Motor neuron (in vitro differentiated cells): ENCODE measurements at regions of chr11 and their contacts with region 1.

Region 1: DNA sequence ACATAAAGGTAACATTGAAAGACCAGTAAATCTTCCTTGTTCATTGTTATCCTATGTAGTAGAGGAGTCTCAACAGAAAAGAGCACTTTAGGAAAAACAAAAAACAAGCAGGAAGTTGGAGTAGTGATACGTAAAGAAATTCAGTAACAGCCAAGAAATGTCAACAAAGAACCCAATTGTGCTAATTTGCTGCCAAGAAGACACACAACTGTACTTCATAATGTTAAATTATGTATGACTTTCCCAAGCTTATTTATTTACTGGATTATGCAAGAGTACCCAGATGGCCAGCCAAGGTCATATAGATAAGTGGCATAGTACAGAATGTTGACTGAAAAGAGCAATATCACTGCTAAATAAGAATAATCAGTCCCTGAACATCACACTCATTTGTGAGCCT is 264.7 kb upstream of the CCDC179 start:
- ATAC-seq: no peak
- H3K4me3 ChIP-seq: no peak overlapping the region
- H3K27ac ChIP-seq: no peak overlapping the region
- H3K4me1 ChIP-seq: peaks cover 5% of the 10 kb centered on the region in 2 donors

Region 2: GRCh38 chr11:23233075-23233474 is 108.1 kb after region 1 on chr11:
- in situ Hi-C with region 1: loop called in 1 of 9 experiments (anchors 25 kb)
- ATAC-seq: no peak
- H3K4me3 ChIP-seq: no peak overlapping the region
- H3K27ac ChIP-seq: no peak overlapping the region
- H3K4me1 ChIP-seq: peaks cover 0 to 6% of the 10 kb centered on the region in 2 donors